AG04450 (cell line): ENCODE measurements at regions of chr10 and their contacts with region 1.

Region 1: DNA sequence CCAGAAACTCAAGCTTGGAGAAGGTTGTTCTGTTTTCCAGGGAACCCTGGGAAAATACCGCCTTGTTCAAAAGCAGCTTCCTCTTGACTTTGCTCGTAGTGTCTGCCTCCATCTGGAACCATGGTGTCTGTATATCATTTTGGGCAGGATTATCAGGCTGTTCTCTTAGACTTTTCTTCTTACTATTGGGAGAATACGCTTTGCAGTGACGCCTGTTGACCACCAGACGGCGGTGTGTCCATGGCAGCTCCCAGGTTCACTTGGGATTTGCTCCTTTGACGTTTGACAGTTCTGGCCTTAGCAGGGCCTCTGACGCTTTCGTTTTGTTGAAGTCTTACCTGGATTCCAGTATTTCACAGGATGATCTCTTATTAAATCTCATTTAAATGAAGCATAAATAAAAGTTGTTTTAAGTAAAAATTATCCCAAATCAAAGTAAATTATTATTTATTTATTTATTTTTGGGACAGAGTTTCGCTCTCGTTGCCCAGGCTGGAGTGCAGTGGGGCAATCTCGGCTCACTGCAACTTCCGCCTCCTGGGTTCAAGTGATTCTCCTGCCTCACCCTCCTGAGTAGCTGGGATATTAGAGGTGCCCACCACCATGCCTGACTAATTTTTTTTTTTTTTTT is 41.8 kb upstream of the GJD4 start:
- DNase-seq: peak; percentile 44
- H3K4me3 ChIP-seq: no peak overlapping the region
- H3K27ac ChIP-seq: no peak overlapping the region
- H3K27me3 ChIP-seq: no peaks in the 10 kb centered on the region
- CTCF ChIP-seq: peak; percentile 100

Region 2: GRCh38 chr10:35236739-35237138 is 326.6 kb before region 1 on chr10:
- CTCF ChIA-PET with region 1: interaction called, 11 read pairs
- POLR2A ChIA-PET with region 1: no interaction called
- DNase-seq: peak; percentile 16
- H3K4me3 ChIP-seq: no peak overlapping the region
- H3K27ac ChIP-seq: no peak overlapping the region
- H3K27me3 ChIP-seq: no peaks in the 10 kb centered on the region
- CTCF ChIP-seq: peak; percentile 73

Region 3: DNA sequence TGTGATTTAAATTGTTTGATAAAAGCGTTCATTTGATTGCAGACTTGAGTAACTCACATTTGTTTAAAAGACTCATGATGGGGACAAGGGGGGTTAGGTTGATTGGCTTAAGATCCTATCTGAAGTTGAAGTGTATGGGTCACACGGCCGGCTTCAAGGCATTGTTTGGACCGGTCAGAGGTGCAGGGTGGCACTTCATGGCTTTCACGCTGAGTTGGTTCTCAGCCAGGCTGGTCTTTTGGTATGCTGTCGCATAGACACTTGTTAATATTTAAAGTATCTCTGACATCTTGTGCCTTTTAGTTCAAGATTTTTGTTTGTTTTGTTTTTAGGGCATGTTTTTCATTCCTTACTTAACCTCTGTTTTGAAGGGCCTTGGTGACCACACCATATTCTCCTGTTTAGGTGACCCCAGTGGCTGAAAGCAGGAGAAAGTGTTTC is 168.9 kb before region 1 on chr10:
- CTCF ChIA-PET with region 1: no interaction called
- POLR2A ChIA-PET with region 1: no interaction called
- DNase-seq: no peak
- H3K4me3 ChIP-seq: no peak overlapping the region
- H3K27ac ChIP-seq: no peak overlapping the region
- H3K27me3 ChIP-seq: no peaks in the 10 kb centered on the region
- CTCF ChIP-seq: no peak

Region 4: GRCh38 chr10:35552621-35553342 is 10.6 kb before region 1 on chr10:
- CTCF ChIA-PET with region 1: interaction called, 23 read pairs
- POLR2A ChIA-PET with region 1: no interaction called
- DNase-seq: no peak
- H3K4me3 ChIP-seq: no peak overlapping the region
- H3K27ac ChIP-seq: no peak overlapping the region
- H3K27me3 ChIP-seq: no peaks in the 10 kb centered on the region
- CTCF ChIP-seq: no peak

Region 5: DNA sequence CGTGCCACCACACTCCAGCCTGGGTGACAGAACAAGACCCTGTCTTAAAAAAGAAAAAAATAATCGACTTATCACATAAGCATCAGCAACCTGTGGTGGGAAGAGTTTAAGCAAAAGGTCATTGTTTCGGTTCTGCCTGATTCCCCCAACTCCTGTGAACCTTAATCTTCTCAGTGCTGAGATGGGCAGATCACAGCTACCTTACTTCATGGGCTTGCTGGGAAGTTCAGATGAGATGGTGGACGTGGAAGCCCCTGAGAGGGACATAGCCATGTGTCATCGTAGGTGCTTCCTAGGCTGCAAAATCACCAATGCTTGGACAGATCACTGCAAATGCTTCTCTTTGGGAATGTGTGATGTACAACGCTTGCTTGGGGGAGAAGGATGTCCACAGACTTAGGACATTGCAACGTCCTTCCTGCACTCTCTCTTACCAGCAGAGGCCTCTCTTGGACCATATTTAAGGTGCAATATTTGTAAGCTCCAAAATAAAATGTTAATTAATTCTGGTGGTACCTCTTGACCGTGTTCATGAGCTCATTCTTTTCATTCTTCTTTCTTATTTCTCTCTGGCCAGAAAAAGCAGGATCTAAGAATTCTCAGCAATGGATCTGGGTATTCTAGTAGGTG is 50.3 kb after region 1 on chr10:
- CTCF ChIA-PET with region 1: interaction called, 10 read pairs
- POLR2A ChIA-PET with region 1: interaction called, 3 read pairs
- DNase-seq: no peak
- H3K4me3 ChIP-seq: no peak overlapping the region
- H3K27ac ChIP-seq: no peak overlapping the region
- H3K27me3 ChIP-seq: peaks cover 10% of the 10 kb centered on the region
- CTCF ChIP-seq: peak; percentile 61

Region 6: GRCh38 chr10:35626971-35627507 is 63.7 kb after region 1 on chr10:
- CTCF ChIA-PET with region 1: no interaction called
- POLR2A ChIA-PET with region 1: no interaction called
- DNase-seq: no peak
- H3K4me3 ChIP-seq: no peak overlapping the region
- H3K27ac ChIP-seq: no peak overlapping the region
- H3K27me3 ChIP-seq: no peaks in the 10 kb centered on the region
- CTCF ChIP-seq: no peak

Region 7: DNA sequence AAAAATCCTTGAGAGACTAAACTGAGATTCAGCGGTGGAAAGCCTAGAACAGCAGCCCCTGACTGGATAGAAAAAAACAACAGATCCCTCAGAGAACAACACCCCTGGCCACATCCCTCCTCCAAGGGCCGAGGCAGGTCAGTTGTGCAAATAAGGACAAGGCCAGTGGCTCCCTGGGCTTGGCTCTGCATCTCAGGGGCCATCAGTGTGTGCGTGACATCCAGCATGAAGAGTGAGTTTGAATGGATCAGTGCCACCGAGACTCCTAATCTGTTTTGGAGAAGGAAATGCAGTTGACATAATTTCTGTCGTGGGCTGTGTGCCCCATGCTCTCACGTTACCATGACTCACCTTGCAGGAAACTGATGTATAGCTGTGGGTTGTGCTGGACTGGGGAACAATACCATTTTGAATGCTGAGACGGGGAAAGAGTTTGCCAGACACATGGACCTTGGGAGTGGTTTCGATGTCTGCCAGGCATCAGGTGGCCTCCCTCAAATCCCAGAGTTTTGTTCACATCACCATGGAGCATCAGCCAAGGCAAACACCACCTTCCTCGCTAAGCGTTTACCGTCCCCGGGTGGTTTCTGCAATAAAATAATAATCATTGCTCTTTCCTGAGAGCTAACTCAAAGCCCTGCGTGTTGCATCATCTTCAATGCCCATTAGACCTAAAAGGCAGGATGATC is 231.9 kb after region 1 on chr10:
- CTCF ChIA-PET with region 1: no interaction called
- POLR2A ChIA-PET with region 1: no interaction called
- DNase-seq: no peak
- H3K4me3 ChIP-seq: no peak overlapping the region
- H3K27ac ChIP-seq: no peak overlapping the region
- H3K27me3 ChIP-seq: no peaks in the 10 kb centered on the region
- CTCF ChIP-seq: no peak